GM13976 (cell line): ENCODE measurements at regions of chr19 and their contacts with region 1.

Region 1: GRCh38 chr19:3304871-3305423 is 61.4 kb upstream of the NFIC start:
- DNase-seq: peak; percentile 87
- CTCF ChIP-seq: peak; percentile 84

Region 2: GRCh38 chr19:3250675-3251074 is 54.3 kb before region 1 on chr19:
- in situ Hi-C with region 1: no loop called
- DNase-seq: peak; percentile 70
- CTCF ChIP-seq: peak; percentile 48

Region 3: DNA sequence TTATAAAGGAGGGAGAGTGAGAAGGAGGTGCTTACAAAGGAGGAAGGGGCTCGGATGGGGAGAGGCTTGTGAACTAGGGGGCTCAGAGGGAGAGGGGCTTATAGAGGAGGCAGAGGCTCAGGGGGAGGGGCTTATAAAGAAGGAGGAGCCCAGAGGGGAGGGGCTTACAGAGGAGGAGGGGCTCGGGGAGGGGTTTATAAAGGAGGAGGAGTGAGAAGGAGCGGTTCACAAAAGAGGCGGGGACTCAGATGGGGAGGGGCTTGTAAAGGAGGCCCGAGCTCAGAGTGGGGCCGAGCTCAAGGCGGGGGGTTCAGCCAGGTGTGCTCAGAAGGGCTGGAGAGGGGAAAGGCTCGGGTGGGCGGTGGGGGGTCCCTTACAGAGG is 174.9 kb after region 1 on chr19:
- in situ Hi-C with region 1: loop called (anchors 10 kb)
- DNase-seq: no peak
- CTCF ChIP-seq: no peak

Region 4: DNA sequence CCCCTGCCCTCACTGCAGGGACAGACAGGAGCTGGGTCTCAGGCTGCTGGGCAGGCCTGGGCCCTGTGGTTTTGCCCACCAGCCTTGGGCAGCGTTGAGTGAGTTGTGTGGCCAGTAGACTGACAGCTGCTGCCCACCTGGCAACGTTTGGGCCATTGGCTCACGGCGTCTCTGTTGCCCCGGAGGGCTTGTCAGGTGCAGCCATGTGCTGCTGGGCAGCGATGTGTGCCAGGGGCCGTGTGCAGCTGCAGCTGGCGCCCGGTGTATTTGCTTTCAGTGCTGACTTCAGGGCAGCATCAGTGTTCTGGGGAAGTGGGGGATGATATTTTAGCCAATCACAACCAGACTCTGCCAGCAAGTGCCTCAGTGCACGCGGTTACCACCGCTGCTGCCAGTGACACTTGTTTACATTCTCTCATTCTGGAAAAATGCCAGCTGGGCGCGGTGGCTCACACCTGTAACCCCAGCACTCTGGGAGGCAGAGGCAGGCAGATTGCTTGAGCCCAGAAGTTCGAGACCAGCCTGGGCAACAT is 211.8 kb after region 1 on chr19:
- in situ Hi-C with region 1: no loop called
- DNase-seq: no peak
- CTCF ChIP-seq: no peak